ENCODE measurements at regions of chr3 and their contacts with region 1.

Region 1: GRCh38 chr3:197775317-197775716 is 15.7 kb upstream of the LRCH3 start:
- DNase-seq: no peak
- H3K4me3 ChIP-seq: no peak overlapping the region
- H3K27ac ChIP-seq: no peak overlapping the region
- H3K4me1 ChIP-seq: no peaks in the 10 kb centered on the region
- H3K27me3 ChIP-seq: no peaks in the 10 kb centered on the region
- CTCF ChIP-seq: no peak

Region 2: DNA sequence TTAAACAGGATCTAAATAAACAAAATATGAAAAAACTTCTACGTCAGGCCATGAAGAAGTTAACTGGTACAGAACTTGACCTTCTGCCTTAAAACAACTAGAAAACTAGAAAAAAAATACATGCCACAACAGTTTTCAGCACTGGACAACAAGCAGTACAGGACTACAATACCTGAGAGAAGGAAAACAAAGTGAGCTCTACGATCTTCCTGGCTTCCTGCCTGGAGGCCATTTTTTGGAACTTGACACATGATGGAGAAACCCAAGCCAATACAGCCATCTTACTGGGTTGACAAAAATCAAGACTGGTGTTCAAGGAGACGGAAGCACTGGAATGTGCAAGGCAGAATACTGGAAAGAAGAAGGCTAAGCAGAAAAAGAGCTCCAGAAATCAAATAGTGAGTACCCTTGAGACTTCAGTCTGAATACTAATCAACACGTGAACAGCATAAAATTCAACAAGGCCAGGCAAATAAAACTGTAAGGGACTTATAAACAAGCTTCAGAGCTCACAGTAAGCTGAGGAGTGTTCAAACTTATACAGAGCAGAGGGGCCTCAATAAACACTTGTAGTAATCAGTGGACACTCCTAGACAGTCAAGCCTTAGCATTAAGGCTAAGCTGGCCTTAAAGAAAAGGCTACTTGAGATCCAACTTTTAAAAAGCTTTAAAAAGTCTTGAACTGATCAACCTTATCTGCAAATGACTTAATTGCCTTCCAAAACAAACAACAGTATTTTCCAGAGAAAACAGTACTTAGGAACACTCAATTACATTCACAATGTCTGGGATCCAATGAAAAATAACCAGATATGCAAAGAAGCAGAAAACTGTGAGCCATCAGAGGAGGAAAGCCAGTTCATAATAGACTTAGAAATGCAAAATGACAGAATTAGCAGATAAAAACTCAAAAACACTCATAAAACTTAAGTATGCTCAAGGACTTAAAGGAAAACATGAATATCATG is 540.1 kb before region 1 on chr3:
- CTCF ChIA-PET with region 1: no interaction called
- POLR2A ChIA-PET with region 1: no interaction called
- intact Hi-C with region 1: no loop called
- DNase-seq: no peak
- H3K4me3 ChIP-seq: no peak overlapping the region
- H3K27ac ChIP-seq: no peak overlapping the region
- H3K4me1 ChIP-seq: no peaks in the 10 kb centered on the region
- H3K27me3 ChIP-seq: no peaks in the 10 kb centered on the region
- CTCF ChIP-seq: no peak

Region 3: DNA sequence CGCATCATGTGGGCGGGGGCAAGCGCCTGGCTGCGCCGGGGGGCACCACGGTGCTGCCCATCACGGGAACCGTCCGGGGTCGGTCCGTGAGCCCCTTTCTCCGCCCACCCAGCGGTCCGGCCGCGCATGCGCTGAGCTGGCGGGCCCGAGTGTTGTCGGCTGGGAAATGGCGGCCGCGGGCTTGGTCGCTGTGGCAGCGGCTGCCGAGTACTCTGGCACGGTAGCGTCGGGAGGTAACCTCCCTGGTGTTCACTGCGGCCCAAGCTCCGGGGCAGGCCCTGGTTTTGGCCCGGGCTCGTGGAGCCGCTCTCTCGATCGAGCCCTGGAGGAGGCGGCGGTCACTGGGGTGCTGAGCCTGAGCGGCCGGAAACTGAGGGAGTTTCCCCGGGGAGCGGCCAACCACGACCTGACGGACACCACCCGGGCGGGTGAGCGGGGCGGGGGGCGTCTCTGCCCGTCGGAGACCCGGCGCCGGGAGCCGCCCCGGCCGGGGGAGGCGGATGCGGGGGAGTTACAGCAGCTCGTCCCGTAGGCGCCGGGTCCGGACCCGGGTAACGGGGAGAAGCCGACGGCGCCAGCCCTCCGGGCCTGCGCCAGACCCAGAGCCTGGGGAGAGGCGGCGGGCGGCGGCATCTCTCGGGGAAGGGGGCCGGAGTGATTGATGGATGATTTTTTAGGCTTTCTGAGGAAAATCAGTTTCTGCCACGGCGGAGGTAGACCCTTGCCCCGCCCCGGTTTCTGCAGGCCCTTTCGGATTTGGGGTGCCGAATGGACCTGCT is 16.0 kb after region 1 on chr3 and contains the start of gene LRCH3:
- CTCF ChIA-PET with region 1: no interaction called
- POLR2A ChIA-PET with region 1: interaction called, 22 read pairs
- intact Hi-C with region 1: no loop called
- DNase-seq: peak; percentile 49 to 84
- H3K4me3 ChIP-seq: peak within 1 kb of the TSS; percentile 89
- H3K27ac ChIP-seq: peak within 1 kb of the TSS; percentile 82
- H3K4me1 ChIP-seq: peaks cover 64% of the 10 kb centered on the region
- H3K27me3 ChIP-seq: no peaks in the 10 kb centered on the region
- CTCF ChIP-seq: no peak
- total RNA-seq, gene LRCH3: 51.9 and 71.5 TPM in 2 replicates

Region 4: GRCh38 chr3:198061119-198062067 is 286.1 kb after region 1 on chr3:
- CTCF ChIA-PET with region 1: no interaction called
- POLR2A ChIA-PET with region 1: interaction called, 10 read pairs
- intact Hi-C with region 1: no loop called
- DNase-seq: no peak
- H3K4me3 ChIP-seq: no peak overlapping the region
- H3K27ac ChIP-seq: no peak overlapping the region
- H3K4me1 ChIP-seq: no peaks in the 10 kb centered on the region
- H3K27me3 ChIP-seq: no peaks in the 10 kb centered on the region
- CTCF ChIP-seq: no peak